Activated CD4-positive, alpha-beta memory T cell treated with anti-CD3 and anti-CD28 coated beads for 36 hours (primary cell): ENCODE measurements at regions of chr17 and their contacts with region 1.

Region 1: GRCh38 chr17:40598663-40599467 is 33.6 kb upstream of the CCR7 start:
- DNase-seq: peak; percentile 91
- H3K4me3 Mint-ChIP-seq: peak overlapping the region; percentile 43
- H3K27ac Mint-ChIP-seq: peak overlapping the region; percentile 94
- H3K4me1 Mint-ChIP-seq: peaks cover 87% of the 10 kb centered on the region
- H3K27me3 Mint-ChIP-seq: no peaks in the 10 kb centered on the region

Region 2: GRCh38 chr17:40542558-40543411 is 56.1 kb before region 1 on chr17:
- CTCF ChIA-PET with region 1: no interaction called
- POLR2A ChIA-PET with region 1: interaction called, 5 read pairs
- intact Hi-C with region 1: loop called (anchors 2 kb)
- DNase-seq: peak; percentile 76
- H3K4me3 Mint-ChIP-seq: peak overlapping the region; percentile 56
- H3K27ac Mint-ChIP-seq: peak overlapping the region; percentile 90
- H3K4me1 Mint-ChIP-seq: peaks cover 78% of the 10 kb centered on the region
- H3K27me3 Mint-ChIP-seq: no peaks in the 10 kb centered on the region

Region 3: GRCh38 chr17:40582328-40582901 is 16.4 kb before region 1 on chr17:
- CTCF ChIA-PET with region 1: interaction called, 5 read pairs
- POLR2A ChIA-PET with region 1: interaction called, 6 read pairs
- intact Hi-C with region 1: loop called (anchors 1 kb)
- DNase-seq: peak; percentile 82
- H3K4me3 Mint-ChIP-seq: peak overlapping the region; percentile 38
- H3K27ac Mint-ChIP-seq: peak overlapping the region; percentile 21
- H3K4me1 Mint-ChIP-seq: peaks cover 82% of the 10 kb centered on the region
- H3K27me3 Mint-ChIP-seq: no peaks in the 10 kb centered on the region

Region 4: DNA sequence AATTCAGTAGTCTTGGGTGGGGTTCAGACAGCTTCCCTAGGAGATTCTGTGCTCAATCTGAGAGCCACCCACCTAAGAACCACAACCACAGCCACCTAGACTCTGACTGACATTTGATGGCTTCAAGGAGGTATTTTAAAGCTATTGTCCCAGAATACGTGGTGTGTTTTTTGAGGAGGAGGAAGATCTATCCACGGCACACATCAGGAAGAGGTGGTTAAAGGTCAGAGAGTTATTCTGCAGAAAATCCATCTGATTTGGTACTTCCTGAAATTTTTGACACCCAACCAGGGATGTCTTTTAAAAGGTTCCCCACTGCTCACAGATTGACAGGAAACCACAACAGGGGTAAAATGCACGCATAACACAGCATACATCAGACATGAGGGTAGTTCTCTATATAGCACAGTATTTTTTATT is 23.7 kb after region 1 on chr17:
- CTCF ChIA-PET with region 1: interaction called, 28 read pairs
- POLR2A ChIA-PET with region 1: interaction called, 4 read pairs
- intact Hi-C with region 1: no loop called
- DNase-seq: peak; percentile 38
- H3K4me3 Mint-ChIP-seq: no peak overlapping the region
- H3K27ac Mint-ChIP-seq: no peak overlapping the region
- H3K4me1 Mint-ChIP-seq: peaks cover 60% of the 10 kb centered on the region
- H3K27me3 Mint-ChIP-seq: no peaks in the 10 kb centered on the region

Region 5: GRCh38 chr17:40678902-40679522 is 80.1 kb after region 1 on chr17:
- CTCF ChIA-PET with region 1: no interaction called
- POLR2A ChIA-PET with region 1: no interaction called
- intact Hi-C with region 1: no loop called
- DNase-seq: no peak
- H3K4me3 Mint-ChIP-seq: no peak overlapping the region
- H3K27ac Mint-ChIP-seq: no peak overlapping the region
- H3K4me1 Mint-ChIP-seq: peaks cover 3% of the 10 kb centered on the region
- H3K27me3 Mint-ChIP-seq: peaks cover 36% of the 10 kb centered on the region